Ascending aorta (tissue), 2 donors: ENCODE measurements at regions of chr2 and their contacts with region 1.

Region 1: DNA sequence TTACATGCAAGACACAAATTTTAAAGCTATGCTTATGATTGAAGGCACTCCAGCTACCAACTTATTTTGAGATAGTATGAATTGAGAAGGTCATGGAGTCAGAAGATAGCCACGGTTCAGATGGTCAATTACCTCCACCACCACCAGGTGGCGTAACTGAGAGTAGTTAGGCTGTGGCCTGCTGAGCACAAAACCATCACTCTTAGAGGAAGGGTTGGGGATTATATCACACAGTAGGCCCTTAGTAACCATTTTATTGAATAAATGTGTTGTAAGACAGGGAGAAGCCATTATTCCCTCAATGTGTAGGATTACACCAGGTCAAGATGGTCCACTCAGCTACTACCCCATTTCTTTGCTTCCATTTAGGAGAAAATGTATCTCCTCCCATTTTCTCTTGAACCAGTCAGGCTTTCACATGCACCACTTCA is 18.8 kb downstream of the KLHL41 start:
- DNase-seq: peak in 1 of 2 donors; percentile 71
- H3K4me3 ChIP-seq: no peak overlapping the region
- H3K27ac ChIP-seq: no peak overlapping the region
- H3K4me1 ChIP-seq: no peaks in the 10 kb centered on the region
- H3K27me3 ChIP-seq: no peaks in the 10 kb centered on the region
- CTCF ChIP-seq: peak; percentile 37 to 71 (median 67)

Region 2: DNA sequence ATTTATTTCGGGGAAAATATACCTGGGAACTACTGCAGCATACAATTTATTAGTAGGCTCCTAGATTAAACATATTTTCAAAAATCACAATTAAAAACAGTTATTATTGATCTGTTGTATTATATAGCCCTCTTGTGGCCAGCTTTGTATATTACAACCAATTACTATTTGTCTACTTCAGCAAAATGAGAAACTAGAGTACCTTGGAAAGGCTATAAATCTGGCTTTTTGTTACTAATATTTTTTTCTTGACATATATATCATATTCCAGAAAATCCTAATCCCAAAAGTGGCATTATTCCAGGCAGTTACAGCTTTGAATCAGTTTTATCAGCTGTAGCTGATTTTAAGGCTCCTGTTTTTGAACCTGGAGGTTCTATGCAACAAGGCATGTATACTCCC is 400.2 kb after region 1 on chr2:
- intact Hi-C with region 1: loop called (anchors 10 kb)
- DNase-seq: no peak
- H3K4me3 ChIP-seq: no peak overlapping the region
- H3K27ac ChIP-seq: no peak overlapping the region
- H3K4me1 ChIP-seq: no peaks in the 10 kb centered on the region
- H3K27me3 ChIP-seq: no peaks in the 10 kb centered on the region
- CTCF ChIP-seq: peak; percentile 48 to 71 (median 53)